ENCODE measurements at regions of chr3 and their contacts with region 1.

Region 1: DNA sequence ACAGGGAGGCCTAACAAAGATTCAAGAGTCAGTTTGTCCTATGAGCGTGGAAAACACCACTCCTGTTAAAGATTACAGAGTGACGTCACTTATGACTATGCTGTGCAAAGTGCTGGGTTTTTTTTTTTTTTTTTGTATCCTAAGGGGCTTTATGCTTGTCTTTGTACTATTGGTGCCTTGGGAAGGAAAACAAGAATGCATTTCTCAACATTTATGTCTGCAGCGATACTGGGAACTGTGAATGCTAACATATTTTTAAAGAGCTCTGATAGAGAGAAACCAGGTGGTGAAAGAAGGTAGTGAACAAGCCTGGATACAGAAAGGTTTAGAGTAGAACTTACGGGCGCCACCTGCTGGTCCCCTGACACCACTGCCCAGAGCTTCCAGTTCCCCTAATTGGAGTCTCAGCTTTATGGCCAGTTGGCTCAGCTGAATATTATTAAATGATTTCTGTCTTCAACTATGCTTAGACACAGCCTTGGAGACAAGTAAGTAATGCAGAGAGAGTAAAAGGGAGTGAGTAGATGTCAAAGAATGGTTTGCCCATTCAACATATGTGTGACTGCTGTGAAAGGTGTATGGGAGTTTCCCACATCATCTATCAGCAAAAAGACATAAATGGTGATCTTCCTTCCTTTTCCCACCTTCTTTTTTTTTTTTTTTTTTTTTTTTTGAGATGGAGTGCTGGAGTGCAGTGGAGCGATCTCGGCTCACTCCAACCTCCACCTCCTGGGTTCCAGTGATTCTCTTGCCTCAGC is 807.9 kb upstream of the CFAP20DC start:
- DNase-seq: peak; percentile 16
- H3K4me3 ChIP-seq: no peak overlapping the region
- H3K27me3 ChIP-seq: no peaks in the 10 kb centered on the region
- CTCF ChIP-seq: peak; percentile 96

Region 2: GRCh38 chr3:59313365-59313764 is 544.4 kb before region 1 on chr3:
- CTCF ChIA-PET with region 1: interaction called, 12 read pairs
- POLR2A ChIA-PET with region 1: no interaction called
- DNase-seq: no peak
- H3K4me3 ChIP-seq: no peak overlapping the region
- H3K27me3 ChIP-seq: no peaks in the 10 kb centered on the region
- CTCF ChIP-seq: peak; percentile 70

Region 3: GRCh38 chr3:59575113-59576001 is 282.4 kb before region 1 on chr3:
- CTCF ChIA-PET with region 1: interaction called, 56 read pairs
- POLR2A ChIA-PET with region 1: no interaction called
- DNase-seq: no peak
- H3K4me3 ChIP-seq: no peak overlapping the region
- H3K27me3 ChIP-seq: no peaks in the 10 kb centered on the region
- CTCF ChIP-seq: peak; percentile 90

Region 4: DNA sequence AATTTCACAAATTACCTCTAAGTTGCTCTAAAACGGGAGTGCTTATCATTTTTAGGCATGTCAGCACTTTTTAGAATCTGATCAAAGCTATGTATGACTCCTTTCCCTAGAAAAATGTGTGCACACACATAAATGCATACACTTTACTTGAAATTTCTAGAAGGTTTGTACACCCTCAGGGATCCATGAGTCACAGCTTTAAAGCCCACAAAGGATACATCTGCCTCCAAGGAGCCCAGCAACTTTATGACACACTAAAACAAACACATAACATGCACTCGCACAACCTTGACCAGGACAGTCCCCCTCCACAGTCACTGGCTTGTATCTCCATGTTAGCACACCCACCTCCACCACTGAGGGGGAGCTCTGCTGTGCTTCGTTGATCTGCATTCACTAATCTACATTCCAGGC is 86.0 kb before region 1 on chr3:
- CTCF ChIA-PET with region 1: interaction called, 7 read pairs
- POLR2A ChIA-PET with region 1: interaction called, 11 read pairs
- DNase-seq: peak; percentile 81
- H3K4me3 ChIP-seq: no peak overlapping the region
- H3K27me3 ChIP-seq: no peaks in the 10 kb centered on the region
- CTCF ChIP-seq: no peak

Region 5: DNA sequence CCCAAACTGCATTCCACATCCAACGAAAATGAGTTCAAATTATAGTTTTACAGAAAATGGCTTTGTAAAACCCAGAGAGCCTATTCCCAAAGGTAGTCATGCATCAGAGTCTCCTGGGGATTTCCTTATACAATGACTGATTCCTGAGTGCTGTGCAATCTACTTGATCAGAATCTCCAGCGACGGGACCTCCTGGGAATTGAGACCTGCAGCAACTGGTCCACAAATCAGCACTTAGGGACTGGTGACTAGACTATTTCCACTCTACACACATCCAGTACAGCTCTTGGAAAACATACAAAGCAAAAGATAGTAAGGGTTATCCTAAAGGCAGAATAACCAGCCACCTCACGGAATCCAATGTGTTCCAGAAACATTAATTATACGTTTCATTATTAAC is 63.1 kb after region 1 on chr3:
- CTCF ChIA-PET with region 1: no interaction called
- POLR2A ChIA-PET with region 1: no interaction called
- DNase-seq: no peak
- H3K4me3 ChIP-seq: no peak overlapping the region
- H3K27me3 ChIP-seq: no peaks in the 10 kb centered on the region
- CTCF ChIP-seq: no peak

Region 6: GRCh38 chr3:61493339-61493738 is 1635.6 kb after region 1 on chr3:
- CTCF ChIA-PET with region 1: no interaction called
- POLR2A ChIA-PET with region 1: interaction called, 18 read pairs
- DNase-seq: no peak
- H3K4me3 ChIP-seq: no peak overlapping the region
- H3K27me3 ChIP-seq: no peaks in the 10 kb centered on the region
- CTCF ChIP-seq: no peak

Measured in BJ (cell line).